GM18951 (cell line): ENCODE measurements at regions of chr22 and their contacts with region 1.

Region 1: GRCh38 chr22:30386960-30387827 is at the start of gene RNF215:
- POLR2A ChIP-seq: peak; percentile 47

Region 2: GRCh38 chr22:30116362-30117117 is 270.7 kb before region 1 on chr22:
- in situ Hi-C with region 1: loop called (anchors 25 kb)
- POLR2A ChIP-seq: no peak

Region 3: GRCh38 chr22:30262917-30263741 is 124.1 kb before region 1 on chr22:
- in situ Hi-C with region 1: loop called (anchors 10 kb)
- POLR2A ChIP-seq: no peak

Region 4: DNA sequence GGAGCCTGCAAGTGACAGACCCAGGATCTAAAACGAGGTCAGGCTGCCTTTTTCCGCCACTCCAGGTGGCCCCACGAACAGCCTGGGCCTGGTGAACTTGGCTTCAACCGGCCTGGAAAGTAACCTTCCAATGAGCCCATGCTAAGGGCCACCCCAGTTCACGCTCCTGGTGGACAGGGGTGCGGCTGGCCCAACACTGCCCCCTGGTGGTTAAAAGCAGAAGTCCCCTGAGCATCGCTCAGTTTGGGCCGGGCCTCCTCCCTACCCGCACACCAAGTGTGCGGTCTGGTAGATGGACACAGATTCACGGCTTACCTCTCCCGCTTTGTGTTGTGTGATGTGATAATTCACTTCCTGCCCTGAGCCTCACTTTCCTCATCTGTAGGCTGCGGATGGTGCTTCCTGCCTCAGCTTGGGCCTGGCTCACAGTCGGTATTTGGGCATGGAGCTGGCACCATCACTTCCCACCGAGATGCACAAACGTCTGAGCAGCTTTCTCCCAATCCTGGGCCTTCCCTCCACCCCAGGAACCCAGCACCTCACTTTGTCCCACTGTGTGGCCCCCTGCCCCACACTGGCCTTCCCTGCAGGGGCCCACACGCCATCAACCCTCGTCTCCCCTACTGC is 98.3 kb after region 1 on chr22:
- in situ Hi-C with region 1: loop called (anchors 10 kb)
- POLR2A ChIP-seq: no peak